ENCODE measurements at regions of chr19 and their contacts with region 1.

Region 1: GRCh38 chr19:13093407-13094105 is 9.1 kb downstream of the LYL1 start:
- DNase-seq: peak; percentile 84
- ATAC-seq: peak; percentile 41
- H3K4me3 Mint-ChIP-seq: no peak overlapping the region; the same call in 1 of the 2 replicates
- H3K27ac Mint-ChIP-seq: no peak overlapping the region
- H3K4me1 Mint-ChIP-seq: peaks cover 39% of the 10 kb centered on the region
- H3K27me3 Mint-ChIP-seq: peaks cover 52% of the 10 kb centered on the region
- CTCF ChIP-seq: peak; percentile 100

Region 2: DNA sequence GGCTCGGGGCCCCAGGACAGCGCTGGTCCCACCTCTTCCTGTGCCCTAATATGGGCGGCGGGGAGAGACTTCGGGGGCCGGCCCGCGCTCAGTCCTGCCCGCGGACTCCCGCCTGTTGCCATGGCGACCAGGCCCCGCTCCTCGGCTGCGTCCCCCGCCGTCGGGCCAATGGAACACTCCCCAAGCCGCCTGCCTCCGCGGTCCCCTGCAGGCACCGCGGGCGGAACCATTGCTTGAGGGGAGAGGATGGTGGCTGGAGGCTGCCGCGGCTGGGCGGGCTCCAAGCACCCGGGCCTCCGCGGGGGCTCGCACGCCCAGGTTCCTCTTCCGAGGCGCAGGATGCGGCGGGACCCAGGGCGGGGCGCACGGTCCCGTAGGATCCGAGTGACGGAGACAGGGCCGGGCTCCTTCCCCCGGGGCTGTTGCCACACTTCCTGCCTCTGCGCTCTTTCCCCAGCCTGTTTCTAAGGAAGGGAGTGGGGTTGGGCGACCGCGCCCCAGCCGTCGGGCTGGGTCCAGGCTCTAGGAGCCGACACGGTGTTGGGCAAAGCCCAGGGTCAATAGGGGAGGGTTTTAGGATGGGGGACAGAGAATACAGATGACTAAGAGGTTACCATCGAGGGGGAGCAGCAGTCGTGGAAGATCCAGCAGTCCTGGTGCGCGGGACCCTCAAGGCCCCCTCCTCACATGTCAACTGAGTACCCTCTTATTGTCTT is 303.5 kb before region 1 on chr19:
- CTCF ChIA-PET with region 1: no interaction called
- POLR2A ChIA-PET with region 1: no interaction called
- DNase-seq: peak; percentile 98
- ATAC-seq: peak; percentile 63
- H3K4me3 Mint-ChIP-seq: peak overlapping the region; percentile 84
- H3K27ac Mint-ChIP-seq: peak overlapping the region; percentile 79; the same call in 1 of the 2 replicates
- H3K4me1 Mint-ChIP-seq: peaks cover 29% of the 10 kb centered on the region
- H3K27me3 Mint-ChIP-seq: peaks cover 32% of the 10 kb centered on the region
- CTCF ChIP-seq: no peak

Region 3: GRCh38 chr19:12983542-12984142 is 109.9 kb before region 1 on chr19:
- CTCF ChIA-PET with region 1: interaction called, 276 read pairs
- POLR2A ChIA-PET with region 1: interaction called, 7 read pairs
- DNase-seq: peak; percentile 81
- ATAC-seq: peak; percentile 76
- H3K4me3 Mint-ChIP-seq: no peak overlapping the region
- H3K27ac Mint-ChIP-seq: no peak overlapping the region
- H3K4me1 Mint-ChIP-seq: peaks cover 6% of the 10 kb centered on the region; the same call in 1 of the 2 replicates
- H3K27me3 Mint-ChIP-seq: peaks cover 39% of the 10 kb centered on the region
- CTCF ChIP-seq: peak; percentile 94

Region 4: DNA sequence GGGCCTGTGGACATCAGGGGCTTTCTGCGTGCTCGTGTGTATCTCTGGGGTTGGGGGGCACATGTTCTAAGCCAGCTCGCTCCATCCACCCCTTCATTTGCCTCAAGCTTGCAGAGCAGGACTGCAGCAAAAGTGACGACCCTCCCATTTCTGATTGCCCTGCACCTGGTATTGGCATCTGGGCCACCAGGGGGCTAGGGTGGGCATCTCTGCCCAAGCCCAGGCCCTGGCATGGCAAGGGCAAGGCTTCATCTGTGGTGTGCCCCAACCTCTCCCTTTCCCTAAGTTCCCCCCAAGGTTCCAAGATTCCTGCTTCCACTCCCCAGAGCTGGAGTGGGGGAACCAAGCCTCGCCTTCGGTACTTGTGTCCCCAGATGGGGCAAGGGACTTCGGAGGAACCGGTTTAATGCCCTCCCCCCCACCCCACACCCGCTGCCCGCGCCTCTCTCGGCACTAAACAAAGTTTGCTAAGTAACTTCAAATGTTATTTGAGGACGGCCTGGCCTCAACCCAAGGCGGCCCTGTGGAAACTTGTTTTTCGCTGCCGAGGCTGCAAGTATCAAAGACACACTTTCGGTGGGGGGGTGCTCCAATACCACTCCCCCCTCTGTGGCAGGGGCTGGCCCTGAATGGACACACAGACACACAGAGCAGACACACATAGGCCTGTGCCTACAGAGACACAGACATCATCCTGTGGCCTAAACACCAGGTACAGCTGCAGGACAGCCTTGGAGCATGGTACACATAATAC is 86.1 kb before region 1 on chr19:
- CTCF ChIA-PET with region 1: interaction called, 13 read pairs
- POLR2A ChIA-PET with region 1: interaction called, 3 read pairs
- DNase-seq: no peak
- ATAC-seq: no peak
- H3K4me3 Mint-ChIP-seq: no peak overlapping the region
- H3K27ac Mint-ChIP-seq: no peak overlapping the region
- H3K4me1 Mint-ChIP-seq: peaks cover 15% of the 10 kb centered on the region
- H3K27me3 Mint-ChIP-seq: peaks cover 96% of the 10 kb centered on the region
- CTCF ChIP-seq: no peak

Region 5: DNA sequence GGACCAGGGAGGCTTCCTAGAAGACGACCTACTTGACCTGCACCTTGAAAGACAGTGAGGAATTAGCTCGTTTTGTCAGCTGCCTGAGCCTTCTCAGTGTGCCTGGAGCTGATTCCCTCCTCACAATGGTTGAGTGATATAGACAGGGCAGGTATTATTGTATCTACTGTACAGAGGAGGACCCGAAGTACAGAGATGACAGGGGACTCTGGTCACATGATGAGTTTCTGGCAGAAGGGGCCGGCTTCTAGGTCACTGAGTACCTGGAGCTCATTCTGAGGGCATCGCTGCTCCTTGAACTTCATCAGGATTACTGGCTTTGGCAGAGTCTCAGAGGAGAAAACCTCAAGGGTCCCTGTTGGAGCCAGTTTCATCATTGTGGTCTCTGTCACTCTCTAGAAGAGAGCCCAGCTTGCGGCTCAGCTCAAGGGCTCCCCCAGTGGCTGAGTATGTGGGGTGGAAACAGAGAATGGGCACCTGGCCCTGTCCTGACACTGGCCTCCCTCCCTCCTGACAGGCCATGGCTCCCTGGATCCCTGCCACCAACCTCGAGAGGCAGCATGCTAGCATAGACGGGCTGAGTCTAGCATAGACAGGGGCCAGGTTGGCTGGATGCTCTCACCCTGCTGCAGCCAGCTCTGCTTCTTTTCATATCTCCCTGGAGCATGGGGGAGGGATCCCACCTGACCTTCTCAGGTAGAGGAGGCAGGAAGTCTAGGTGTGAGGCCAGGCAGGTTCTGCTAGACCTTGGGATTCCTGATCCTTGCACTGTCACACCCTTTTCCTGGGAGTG is 59.5 kb before region 1 on chr19:
- CTCF ChIA-PET with region 1: interaction called, 110 read pairs
- POLR2A ChIA-PET with region 1: no interaction called
- DNase-seq: peak; percentile 85
- ATAC-seq: peak; percentile 91
- H3K4me3 Mint-ChIP-seq: no peak overlapping the region
- H3K27ac Mint-ChIP-seq: no peak overlapping the region
- H3K4me1 Mint-ChIP-seq: peaks cover 8% of the 10 kb centered on the region
- H3K27me3 Mint-ChIP-seq: peaks cover 81% of the 10 kb centered on the region
- CTCF ChIP-seq: peak; percentile 53

Region 6: GRCh38 chr19:13082192-13083007 is 11.2 kb before region 1 on chr19:
- CTCF ChIA-PET with region 1: interaction called, 58 read pairs
- POLR2A ChIA-PET with region 1: no interaction called
- DNase-seq: peak; percentile 60
- ATAC-seq: peak; percentile 67
- H3K4me3 Mint-ChIP-seq: peak overlapping the region; percentile 40; the same call in 1 of the 2 replicates
- H3K27ac Mint-ChIP-seq: no peak overlapping the region
- H3K4me1 Mint-ChIP-seq: peaks cover 37% of the 10 kb centered on the region
- H3K27me3 Mint-ChIP-seq: peaks cover 19% of the 10 kb centered on the region
- CTCF ChIP-seq: no peak

Region 7: GRCh38 chr19:13150187-13150930 is 56.8 kb after region 1 on chr19 and contains the starts of genes IER2 and STX10:
- CTCF ChIA-PET with region 1: interaction called, 11 read pairs
- POLR2A ChIA-PET with region 1: interaction called, 4 read pairs
- DNase-seq: peak; percentile 90
- ATAC-seq: peak; percentile 18
- H3K4me3 Mint-ChIP-seq: peak within 1 kb of the TSS; percentile 99
- H3K27ac Mint-ChIP-seq: peak within 1 kb of the TSS; percentile 99
- H3K4me1 Mint-ChIP-seq: peaks cover 13% of the 10 kb centered on the region
- H3K27me3 Mint-ChIP-seq: peaks cover 7% of the 10 kb centered on the region; the same call in 1 of the 2 replicates
- CTCF ChIP-seq: no peak
- total RNA-seq, gene IER2: 138 to 154 TPM (median 150 TPM) in 3 replicates
- total RNA-seq, gene STX10: 53.7 to 56.9 TPM (median 54.6 TPM) in 3 replicates

Region 8: DNA sequence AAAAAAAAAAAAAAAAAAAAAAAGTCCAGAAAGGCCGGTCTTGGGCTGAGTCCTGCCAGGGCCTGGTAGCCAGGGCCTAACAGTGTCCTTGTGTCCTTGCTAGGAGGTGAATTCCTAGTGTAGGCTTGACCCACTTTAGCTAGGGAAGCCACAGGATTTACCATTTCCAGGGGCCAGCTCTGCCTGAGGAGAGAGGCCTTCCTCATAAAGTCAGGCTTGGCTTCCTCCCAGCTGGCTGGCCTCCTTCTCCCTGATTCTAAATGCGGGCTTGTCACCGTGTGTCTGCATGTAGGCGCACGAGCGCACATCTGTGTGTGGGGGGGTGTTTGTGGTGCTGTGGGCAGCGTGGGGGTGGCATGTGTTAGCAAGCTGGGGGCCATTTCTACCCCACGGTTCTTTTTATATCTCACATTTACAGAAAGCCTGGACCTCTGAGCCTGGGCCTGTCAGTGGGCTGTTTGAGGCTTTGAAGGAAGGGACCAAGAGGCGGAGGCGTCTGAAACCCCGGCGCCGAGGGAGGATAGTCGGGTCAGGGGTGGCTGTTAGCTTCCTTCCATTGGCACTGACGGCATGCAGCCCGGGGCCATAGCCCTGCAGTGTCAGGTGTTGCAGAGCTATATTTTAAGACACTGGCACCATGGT is 88.3 kb after region 1 on chr19:
- CTCF ChIA-PET with region 1: no interaction called
- POLR2A ChIA-PET with region 1: no interaction called
- DNase-seq: no peak
- ATAC-seq: peak; percentile 28; the same call in 1 of the 2 replicates
- H3K4me3 Mint-ChIP-seq: no peak overlapping the region
- H3K27ac Mint-ChIP-seq: peak overlapping the region; percentile 41; the same call in 1 of the 2 replicates
- H3K4me1 Mint-ChIP-seq: peaks cover 11% of the 10 kb centered on the region
- H3K27me3 Mint-ChIP-seq: no peaks in the 10 kb centered on the region
- CTCF ChIP-seq: no peak